Left colon (tissue), 2 donors: ENCODE measurements at regions of chr20 and their contacts with region 1.

Region 1: DNA sequence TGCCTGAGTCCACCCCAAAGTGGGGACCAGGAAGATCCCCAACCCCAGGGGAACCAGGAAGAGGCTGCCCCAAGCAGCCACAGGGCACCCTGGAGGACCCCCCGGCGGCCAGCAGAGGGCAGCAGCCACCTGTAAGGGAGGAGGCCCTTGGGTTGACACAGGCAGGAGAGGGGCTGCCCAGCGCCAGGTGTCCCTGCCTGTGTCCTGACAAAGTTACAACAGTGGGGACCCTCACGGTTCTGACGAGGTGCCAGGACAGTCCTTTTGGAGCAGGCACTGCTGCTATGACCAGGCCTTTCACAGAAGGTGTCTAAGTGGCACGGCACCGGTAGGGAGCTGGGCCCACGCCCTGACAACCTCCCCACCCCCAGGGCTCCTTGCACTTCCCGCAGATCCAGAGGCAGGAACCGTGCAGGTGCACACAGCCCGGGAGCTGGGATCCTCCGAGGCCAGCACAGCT is 176.7 kb downstream of the BMP7 start:
- DNase-seq: peak; percentile 49 to 81
- ATAC-seq: peak; percentile 86

Region 2: DNA sequence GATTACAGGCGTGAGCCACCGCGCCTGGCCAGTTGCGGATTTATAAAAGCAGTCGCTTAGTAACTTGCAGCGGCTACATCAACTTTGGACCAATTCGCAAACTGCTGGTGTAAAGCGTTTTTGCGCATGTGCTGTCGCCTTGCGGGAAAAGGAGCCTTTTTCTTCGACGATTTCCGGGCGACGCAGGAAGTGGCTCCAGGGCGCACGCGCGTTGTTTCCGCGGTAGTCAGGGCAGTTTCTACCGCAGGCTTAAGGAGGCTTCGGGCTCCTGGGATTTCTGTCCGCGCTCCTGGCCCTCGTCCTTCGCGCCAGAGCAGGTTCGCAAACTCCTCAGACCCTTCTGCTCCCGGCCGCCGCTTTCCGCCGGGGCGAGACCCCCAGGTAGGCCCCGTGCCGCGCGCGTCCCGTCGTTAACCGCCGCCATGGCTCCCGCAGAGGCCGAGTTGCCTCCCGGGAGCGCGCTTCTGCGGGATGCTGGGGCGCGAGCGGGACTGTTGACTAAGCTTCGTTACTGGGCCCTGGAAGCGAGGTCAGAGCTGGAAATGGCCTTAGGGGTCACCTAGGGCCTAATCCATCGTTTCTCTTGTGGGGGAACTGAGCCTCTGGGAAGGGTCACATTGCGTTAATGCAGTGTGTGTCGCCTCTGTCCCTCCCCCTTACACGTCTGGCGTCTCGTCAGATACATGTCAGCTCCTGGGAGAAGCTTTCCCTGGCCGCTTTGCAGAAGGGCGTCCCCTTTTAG is 261.5 kb after region 1 on chr20 and contains the start of gene RAE1:
- intact Hi-C with region 1: loop called (anchors 2 to 5 kb)
- DNase-seq: peak; percentile 92 to 94
- ATAC-seq: peak; percentile 95
- total RNA-seq, gene RAE1: 16.0 to 17.2 TPM